Testis (tissue), 5 donors: ENCODE measurements at regions of chr11 and their contacts with region 1.

Region 1: GRCh38 chr11:119095066-119095880 is 6.4 kb downstream of the DPAGT1 start:
- DNase-seq: peak; percentile 100
- H3K4me3 ChIP-seq: peak overlapping the region; percentile 77 to 80
- H3K27ac ChIP-seq: peak overlapping the region; percentile 83 to 96
- H3K4me1 ChIP-seq: peaks cover 21% of the 10 kb centered on the region
- H3K27me3 ChIP-seq: no peaks in the 10 kb centered on the region
- CTCF ChIP-seq: peak in 1 of 3 experiments; percentile 15
- POLR2A ChIP-seq: peak; percentile 74

Region 2: GRCh38 chr11:119057000-119057769 is 38.1 kb before region 1 on chr11 and contains the start of gene HYOU1:
- intact Hi-C with region 1: loop called (anchors 5 kb)
- DNase-seq: peak; percentile 98
- H3K4me3 ChIP-seq: peak within 1 kb of the TSS; percentile 90 to 96
- H3K27ac ChIP-seq: peak within 1 kb of the TSS; percentile 77 to 83
- H3K4me1 ChIP-seq: peaks cover 12% of the 10 kb centered on the region
- H3K27me3 ChIP-seq: no peaks in the 10 kb centered on the region
- CTCF ChIP-seq: peak in 1 of 3 experiments; percentile 10
- POLR2A ChIP-seq: peak; percentile 41
- total RNA-seq, gene HYOU1: 126 to 127 TPM

Region 3: GRCh38 chr11:119181677-119182412 is 86.6 kb after region 1 on chr11:
- intact Hi-C with region 1: loop called (anchors 10 kb)
- DNase-seq: no peak
- H3K4me3 ChIP-seq: no peak overlapping the region
- H3K27ac ChIP-seq: no peak overlapping the region
- H3K4me1 ChIP-seq: no peaks in the 10 kb centered on the region
- H3K27me3 ChIP-seq: no peaks in the 10 kb centered on the region
- CTCF ChIP-seq: no peak
- POLR2A ChIP-seq: no peak